Lower leg skin (tissue), 4 donors: ENCODE measurements at regions of chr9 and their contacts with region 1.

Region 1: GRCh38 chr9:110256380-110257096 is at the start of gene TXN:
- DNase-seq: peak; percentile 86 to 98
- H3K4me3 ChIP-seq: peak within 1 kb of the TSS; percentile 88
- CTCF ChIP-seq: no peak
- POLR2A ChIP-seq: peak in 1 of 2 donors; percentile 20
- total RNA-seq, gene TXN: 122 to 170 (median 130) TPM

Region 2: DNA sequence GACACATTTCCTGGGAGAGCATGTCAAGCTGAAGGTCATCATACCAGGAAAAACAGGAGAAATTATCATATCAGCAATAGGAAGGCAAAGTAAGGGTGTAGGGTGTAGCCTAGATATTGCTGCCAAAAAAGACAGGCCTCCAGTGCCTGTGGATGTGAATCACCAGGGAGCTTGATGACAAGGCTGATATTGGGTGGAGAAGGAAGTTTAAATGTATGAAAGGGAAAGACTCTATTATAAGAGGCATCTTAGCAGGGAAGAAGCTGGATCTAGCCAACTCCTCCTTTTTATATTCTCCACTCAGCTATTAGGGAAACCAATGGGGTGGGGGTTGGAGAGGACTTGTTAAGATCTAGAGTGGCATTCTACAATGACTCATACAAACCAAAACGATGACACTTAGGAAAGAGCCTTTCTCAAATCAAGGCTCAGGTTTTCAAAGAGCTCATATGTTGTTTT is 94.5 kb after region 1 on chr9:
- intact Hi-C with region 1: loop called (anchors 10 kb)
- DNase-seq: peak in 1 of 2 donors; percentile 42
- H3K4me3 ChIP-seq: no peak overlapping the region
- CTCF ChIP-seq: no peak
- POLR2A ChIP-seq: no peak